Posterior vena cava (tissue), 2 donors: ENCODE measurements at regions of chr5 and their contacts with region 1.

Region 1: GRCh38 chr5:25020454-25020853 is 375.7 kb upstream of the CDH10 start:
- DNase-seq: no peak

Region 2: DNA sequence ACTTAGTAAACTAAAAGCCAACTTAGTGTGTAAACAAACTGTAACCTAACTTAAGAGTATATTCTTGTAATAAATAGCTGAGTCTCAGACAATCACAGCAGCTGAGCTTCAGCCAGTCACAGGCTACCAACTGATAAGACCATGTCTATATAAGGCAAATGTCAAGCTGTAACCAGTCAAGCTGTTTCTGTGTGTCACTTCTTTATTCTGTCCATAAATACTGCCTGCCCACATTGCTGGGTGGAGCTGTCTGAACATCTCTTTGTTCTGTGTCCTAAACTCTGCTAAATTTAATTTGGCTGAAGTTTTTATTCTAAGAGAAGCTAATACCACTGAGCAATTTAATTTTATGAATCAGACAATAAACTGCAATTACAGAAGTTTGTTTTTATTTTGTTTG is 36.4 kb after region 1 on chr5:
- intact Hi-C with region 1: loop called in 1 of 2 experiments (anchors 1 kb)
- DNase-seq: no peak